ENCODE measurements at regions of chr15 and their contacts with region 1.

Region 1: DNA sequence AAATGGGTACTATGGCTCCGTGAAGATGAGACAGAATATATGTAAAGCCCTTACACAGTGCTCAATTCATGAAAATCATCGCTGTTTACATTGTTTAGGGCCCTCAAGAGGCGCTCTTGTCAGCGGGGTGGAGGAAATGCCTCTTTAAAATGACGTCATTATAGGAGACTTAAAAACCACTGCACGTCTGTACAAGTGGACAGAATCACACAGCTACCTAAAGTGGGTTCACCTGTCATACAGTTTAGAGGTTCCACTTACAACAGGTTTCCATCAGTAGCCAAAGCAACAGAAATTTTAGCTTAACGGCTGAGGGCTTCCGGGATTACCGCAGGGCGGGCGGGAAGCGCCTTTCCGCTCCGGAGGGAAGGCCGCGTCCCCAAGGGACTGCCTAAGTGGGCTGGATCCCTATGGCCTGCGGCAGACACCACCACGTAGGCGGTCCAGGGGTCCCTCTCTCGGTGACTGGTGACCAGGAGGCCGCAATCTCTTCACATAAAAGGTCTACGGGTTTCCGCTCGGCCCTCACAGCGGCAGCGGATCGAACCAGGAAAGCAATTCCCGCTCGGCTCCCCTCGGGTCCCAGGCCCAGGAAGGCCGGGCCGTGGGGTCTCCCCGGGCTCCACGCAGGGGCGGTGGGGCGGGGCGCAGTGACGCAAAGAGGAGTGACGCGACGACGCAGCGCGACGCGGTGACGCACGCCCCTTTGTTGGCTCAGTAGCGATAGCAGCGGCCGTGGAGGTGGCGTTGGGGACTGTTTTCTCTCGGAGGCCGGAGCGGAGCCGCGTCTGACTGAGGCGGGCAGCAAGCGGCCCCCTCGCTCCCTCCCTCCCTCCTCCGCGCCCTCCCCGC is at the start of gene ARIH1:
- DNase-seq: peak; percentile 94
- H3K4me3 Mint-ChIP-seq: peak within 1 kb of the TSS; percentile 98
- H3K27ac Mint-ChIP-seq: peak within 1 kb of the TSS; percentile 98
- H3K4me1 Mint-ChIP-seq: peaks cover 34% of the 10 kb centered on the region
- H3K27me3 Mint-ChIP-seq: no peaks in the 10 kb centered on the region
- total RNA-seq, gene ARIH1: 174 to 183 TPM

Region 2: DNA sequence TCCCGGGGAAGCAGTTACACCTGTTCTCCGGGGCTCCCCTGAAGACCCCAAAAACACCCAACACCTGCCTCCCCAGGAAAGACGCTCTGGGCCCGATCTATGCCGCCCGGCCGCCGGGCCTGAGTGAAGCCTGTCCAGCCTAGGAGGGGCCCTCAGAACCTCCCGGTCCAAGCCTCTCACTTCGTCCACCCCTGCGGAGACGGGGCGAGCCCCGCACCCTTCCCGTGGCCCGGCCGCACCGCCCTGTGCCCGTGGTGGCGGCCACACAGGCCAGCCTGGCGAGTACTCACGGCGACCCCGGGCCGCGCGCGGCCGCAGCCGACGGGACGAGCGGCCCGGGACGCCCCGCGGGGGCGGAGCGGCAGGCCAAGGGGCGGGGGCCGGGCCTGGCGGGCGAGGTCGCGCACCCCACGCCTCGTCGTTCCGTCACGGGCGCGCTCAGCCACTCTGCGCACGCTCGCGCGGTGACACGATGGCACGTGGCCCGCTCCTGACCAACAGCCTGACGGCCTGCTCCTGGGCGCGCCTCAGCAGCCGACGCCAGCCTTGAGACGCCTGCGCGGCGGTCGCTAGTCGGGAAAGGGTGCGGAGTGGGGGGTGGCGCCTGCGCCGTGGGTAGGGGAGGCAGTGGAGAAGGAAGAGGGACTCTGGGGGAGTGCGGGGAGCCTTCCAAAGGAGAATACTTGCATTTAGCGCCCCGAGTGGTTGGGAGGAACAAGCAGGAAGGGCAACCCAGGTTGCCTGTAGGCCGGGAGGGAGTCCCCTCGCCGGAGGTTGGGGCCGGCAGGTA is 201.4 kb before region 1 on chr15 and contains the start of gene PARP6:
- CTCF ChIA-PET with region 1: no interaction called
- intact Hi-C with region 1: loop called (anchors 2 kb)
- DNase-seq: peak; percentile 98
- H3K4me3 Mint-ChIP-seq: peak within 1 kb of the TSS; percentile 87
- H3K27ac Mint-ChIP-seq: peak within 1 kb of the TSS; percentile 91
- H3K4me1 Mint-ChIP-seq: peaks cover 36% of the 10 kb centered on the region
- H3K27me3 Mint-ChIP-seq: no peaks in the 10 kb centered on the region
- total RNA-seq, gene PARP6: 38.8 to 44.7 TPM

Region 3: DNA sequence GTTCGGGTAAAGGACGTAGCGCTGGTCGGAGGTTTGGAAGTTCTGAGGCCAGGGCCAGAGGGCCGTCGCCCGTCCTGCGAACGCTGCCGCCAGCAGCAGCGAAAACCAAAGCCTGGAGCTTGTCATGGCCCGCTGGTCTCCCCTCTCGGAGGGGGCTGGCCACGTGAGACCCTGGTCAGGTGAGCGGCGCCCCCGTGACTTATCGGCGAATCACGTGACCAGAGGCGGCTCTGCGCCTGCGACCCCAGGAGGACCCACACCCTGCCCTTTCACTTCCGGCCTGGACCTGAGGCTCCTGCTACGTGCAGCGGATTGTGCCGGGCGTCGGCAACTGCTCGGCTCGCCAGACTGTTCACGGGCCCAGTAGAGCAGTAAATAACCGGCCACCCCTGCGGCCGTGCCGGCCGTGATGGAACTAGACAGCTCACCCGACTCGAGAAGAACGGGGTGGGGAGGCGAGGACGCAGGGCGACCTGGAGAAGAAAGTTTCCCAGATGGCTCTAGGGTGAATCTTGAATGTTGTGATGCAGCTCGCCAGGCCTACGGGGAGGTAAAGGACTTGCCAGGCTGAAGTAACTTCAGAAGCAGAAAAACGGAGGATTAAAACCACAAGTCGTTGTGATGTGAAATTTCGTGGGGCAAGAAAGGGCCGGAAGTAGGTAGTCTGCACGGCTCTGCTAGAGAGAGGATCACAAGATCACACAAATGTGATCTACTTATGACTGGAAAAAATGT is 97.8 kb before region 1 on chr15 and contains the start of gene HEXA:
- CTCF ChIA-PET with region 1: interaction called, 4 read pairs
- intact Hi-C with region 1: loop called (anchors 1 kb)
- DNase-seq: peak; percentile 98
- H3K4me3 Mint-ChIP-seq: peak within 1 kb of the TSS; percentile 92
- H3K27ac Mint-ChIP-seq: peak within 1 kb of the TSS; percentile 94
- H3K4me1 Mint-ChIP-seq: peaks cover 42% of the 10 kb centered on the region
- H3K27me3 Mint-ChIP-seq: no peaks in the 10 kb centered on the region
- total RNA-seq, gene HEXA: 47.7 to 49.3 TPM

Region 4: GRCh38 chr15:72532991-72533601 is 59.3 kb after region 1 on chr15:
- CTCF ChIA-PET with region 1: interaction called, 9 read pairs
- intact Hi-C with region 1: loop called (anchors 1 kb)
- DNase-seq: peak; percentile 36
- H3K4me3 Mint-ChIP-seq: no peak overlapping the region
- H3K27ac Mint-ChIP-seq: no peak overlapping the region
- H3K4me1 Mint-ChIP-seq: peaks cover 47% of the 10 kb centered on the region
- H3K27me3 Mint-ChIP-seq: no peaks in the 10 kb centered on the region

Region 5: GRCh38 chr15:72591361-72591760 is 117.5 kb after region 1 on chr15:
- CTCF ChIA-PET with region 1: no interaction called
- intact Hi-C with region 1: no loop called
- DNase-seq: no peak
- H3K4me3 Mint-ChIP-seq: no peak overlapping the region
- H3K27ac Mint-ChIP-seq: no peak overlapping the region
- H3K4me1 Mint-ChIP-seq: no peaks in the 10 kb centered on the region
- H3K27me3 Mint-ChIP-seq: no peaks in the 10 kb centered on the region

Region 6: DNA sequence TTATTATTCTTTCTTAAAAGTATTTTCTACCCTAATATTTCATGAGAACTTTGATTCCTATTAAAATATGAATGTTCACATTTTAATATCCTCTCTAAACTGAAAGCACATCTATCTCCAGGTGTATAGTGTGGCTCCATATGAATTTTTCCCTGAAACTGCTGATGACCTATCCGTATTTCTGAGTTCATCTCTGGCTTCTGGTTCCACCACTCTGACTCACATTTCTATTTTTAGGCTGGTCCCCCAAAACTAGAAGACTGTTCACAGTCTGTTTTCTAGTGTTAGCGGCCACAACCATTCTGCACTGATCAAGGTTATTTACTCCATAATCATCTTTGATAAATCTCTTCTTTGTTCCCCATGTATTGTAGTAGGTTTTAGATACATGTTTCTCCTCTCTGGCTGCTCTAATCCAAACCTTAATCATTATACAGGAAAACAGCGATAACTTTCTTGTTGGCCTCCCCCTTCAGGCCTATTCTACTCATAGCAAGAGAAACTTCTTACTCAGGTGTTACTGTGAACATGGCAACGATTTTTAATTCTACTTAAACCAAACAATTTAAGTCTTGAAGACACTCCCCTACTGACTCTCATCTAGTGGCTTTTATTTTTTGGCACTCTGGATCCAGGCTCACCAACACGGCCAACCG is 297.0 kb after region 1 on chr15:
- CTCF ChIA-PET with region 1: no interaction called
- intact Hi-C with region 1: no loop called
- DNase-seq: no peak
- H3K4me3 Mint-ChIP-seq: no peak overlapping the region
- H3K27ac Mint-ChIP-seq: peak overlapping the region; percentile 59
- H3K4me1 Mint-ChIP-seq: peaks cover 23% of the 10 kb centered on the region
- H3K27me3 Mint-ChIP-seq: no peaks in the 10 kb centered on the region

Region 7: GRCh38 chr15:73051811-73052678 is 578.2 kb after region 1 on chr15 and contains the start of gene NEO1:
- CTCF ChIA-PET with region 1: no interaction called
- intact Hi-C with region 1: loop called (anchors 10 kb)
- DNase-seq: peak; percentile 81
- H3K4me3 Mint-ChIP-seq: peak within 1 kb of the TSS; percentile 77
- H3K27ac Mint-ChIP-seq: no peak within 1 kb of the TSS
- H3K4me1 Mint-ChIP-seq: peaks cover 6% of the 10 kb centered on the region
- H3K27me3 Mint-ChIP-seq: peaks cover 8% of the 10 kb centered on the region
- total RNA-seq, gene NEO1: 4.3 to 4.4 TPM

Measured in activated naive CD4-positive, alpha-beta T cell treated with anti-CD3 and anti-CD28 coated beads for 36 hours (primary cell).